Activated CD4-positive, alpha-beta T cell treated with anti-CD3 and anti-CD28 coated beads for 36 hours (primary cell): ENCODE measurements at regions of chr3 and their contacts with region 1.

Region 1: DNA sequence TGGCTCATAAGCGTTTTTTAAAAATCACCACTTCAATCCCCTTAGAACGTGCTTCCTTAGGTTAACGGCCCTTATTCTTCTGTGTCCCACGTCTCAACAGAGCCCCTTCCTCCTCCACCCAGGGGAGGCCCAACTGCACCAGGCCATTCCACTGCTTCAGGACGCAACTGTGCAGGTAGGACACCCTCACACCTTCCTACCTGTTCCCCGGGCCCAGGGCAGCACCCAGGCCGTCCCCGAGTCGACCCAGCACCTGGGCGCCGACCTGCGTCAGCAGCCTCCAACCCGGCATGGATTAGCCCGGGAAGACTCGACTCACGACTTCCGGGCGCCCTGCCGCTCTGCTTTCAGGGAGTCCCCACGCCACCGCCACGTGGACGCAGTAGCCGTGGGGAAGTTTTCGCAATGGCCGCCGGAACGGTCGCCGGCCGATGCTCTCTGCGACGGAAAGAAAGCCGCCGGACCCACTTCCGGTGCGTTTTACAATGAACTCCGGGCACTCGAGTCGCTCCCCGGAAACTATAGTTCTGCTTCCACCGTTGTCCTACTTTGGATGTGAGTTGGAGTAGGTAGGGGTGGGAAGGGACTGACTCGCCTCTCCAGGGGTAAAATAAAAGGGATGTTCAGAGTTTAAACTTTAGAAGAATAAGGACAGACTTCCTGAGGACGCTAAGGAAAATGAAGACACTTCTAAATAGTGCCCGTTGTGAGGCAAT is at the start of gene MRPL3:
- DNase-seq: peak; percentile 92
- ATAC-seq: peak; percentile 97
- H3K4me3 Mint-ChIP-seq: peak within 1 kb of the TSS; percentile 98
- H3K27ac Mint-ChIP-seq: peak within 1 kb of the TSS; percentile 93
- H3K4me1 Mint-ChIP-seq: peaks cover 33% of the 10 kb centered on the region
- H3K27me3 Mint-ChIP-seq: no peaks in the 10 kb centered on the region
- total RNA-seq, gene MRPL3: 166 to 278 TPM

Region 2: DNA sequence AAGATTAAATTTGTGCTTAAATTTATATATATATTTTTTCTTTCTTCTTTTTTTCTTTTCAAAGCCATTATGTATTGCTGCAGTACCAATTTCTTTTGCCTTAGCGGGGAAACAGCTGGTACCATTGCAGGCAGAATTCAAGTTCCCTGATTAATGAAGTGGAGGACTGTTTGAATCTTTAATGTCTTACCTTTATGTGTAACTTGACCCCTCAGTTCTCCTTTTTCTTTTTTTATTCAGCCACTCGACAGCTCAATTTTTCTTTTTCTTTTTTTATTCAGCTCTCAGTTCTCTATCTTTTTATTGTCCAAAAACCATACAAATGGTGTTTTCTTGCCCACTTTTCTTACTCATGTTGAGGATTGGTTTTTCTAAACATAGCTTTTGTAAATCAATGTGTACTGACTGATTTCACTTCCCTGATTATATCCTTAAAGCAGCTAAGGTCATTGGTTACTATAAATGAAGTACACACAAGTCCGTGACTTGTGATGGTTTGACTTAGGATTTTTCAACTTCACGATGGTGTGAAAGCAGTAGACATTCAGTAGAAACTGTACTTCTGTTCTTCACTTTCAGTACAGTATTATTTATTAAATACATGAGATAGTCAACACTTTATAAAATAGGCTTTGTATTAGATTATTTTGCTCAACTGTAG is 586.1 kb before region 1 on chr3:
- CTCF ChIA-PET with region 1: no interaction called
- POLR2A ChIA-PET with region 1: no interaction called
- intact Hi-C with region 1: no loop called
- DNase-seq: no peak
- ATAC-seq: no peak
- H3K4me3 Mint-ChIP-seq: no peak overlapping the region
- H3K27ac Mint-ChIP-seq: no peak overlapping the region
- H3K4me1 Mint-ChIP-seq: peaks cover 26% of the 10 kb centered on the region
- H3K27me3 Mint-ChIP-seq: no peaks in the 10 kb centered on the region

Region 3: DNA sequence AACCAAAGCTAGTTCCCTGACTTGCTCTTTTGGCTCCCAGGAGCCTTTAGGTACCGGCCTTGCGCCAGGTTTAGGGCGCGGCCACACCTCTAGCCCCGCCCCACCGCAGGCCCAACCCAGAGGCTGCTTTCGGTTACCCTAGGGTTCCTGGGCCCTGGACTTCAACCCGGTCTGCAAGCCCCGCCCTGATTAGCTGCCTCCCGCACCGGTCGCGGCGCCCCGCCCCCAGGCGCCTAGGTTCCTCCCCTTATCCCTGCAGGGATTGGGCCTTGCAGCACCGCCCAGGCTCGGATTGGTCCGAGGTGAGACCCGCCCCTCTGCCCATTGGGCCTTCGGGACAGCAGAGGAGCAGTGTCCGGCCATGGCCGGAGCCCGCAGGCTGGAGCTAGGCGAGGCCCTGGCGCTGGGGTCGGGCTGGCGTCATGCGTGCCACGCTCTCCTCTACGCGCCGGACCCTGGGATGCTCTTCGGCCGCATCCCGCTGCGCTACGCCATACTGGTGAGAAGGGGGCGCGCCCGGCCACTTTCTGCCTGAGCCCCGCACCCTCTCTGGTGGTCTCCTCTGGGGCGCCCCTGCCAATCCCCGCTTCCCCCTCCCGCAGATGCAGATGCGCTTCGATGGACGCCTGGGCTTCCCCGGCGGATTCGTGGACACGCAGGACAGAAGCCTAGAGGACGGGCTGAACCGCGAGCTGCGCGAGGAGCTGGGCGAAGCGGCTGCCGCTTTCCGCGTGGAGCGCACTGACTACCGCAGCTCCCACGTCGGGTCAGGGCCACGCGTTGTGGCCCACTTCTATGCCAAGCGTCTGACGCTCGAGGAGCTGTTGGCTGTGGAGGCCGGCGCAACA is 121.0 kb before region 1 on chr3 and contains the start of gene NUDT16:
- CTCF ChIA-PET with region 1: no interaction called
- POLR2A ChIA-PET with region 1: no interaction called
- intact Hi-C with region 1: loop called (anchors 1 kb)
- DNase-seq: peak; percentile 98
- ATAC-seq: peak; percentile 100
- H3K4me3 Mint-ChIP-seq: peak within 1 kb of the TSS; percentile 90
- H3K27ac Mint-ChIP-seq: peak within 1 kb of the TSS; percentile 91
- H3K4me1 Mint-ChIP-seq: peaks cover 22% of the 10 kb centered on the region
- H3K27me3 Mint-ChIP-seq: no peaks in the 10 kb centered on the region
- total RNA-seq, gene NUDT16: 4.0 to 5.7 TPM

Region 4: DNA sequence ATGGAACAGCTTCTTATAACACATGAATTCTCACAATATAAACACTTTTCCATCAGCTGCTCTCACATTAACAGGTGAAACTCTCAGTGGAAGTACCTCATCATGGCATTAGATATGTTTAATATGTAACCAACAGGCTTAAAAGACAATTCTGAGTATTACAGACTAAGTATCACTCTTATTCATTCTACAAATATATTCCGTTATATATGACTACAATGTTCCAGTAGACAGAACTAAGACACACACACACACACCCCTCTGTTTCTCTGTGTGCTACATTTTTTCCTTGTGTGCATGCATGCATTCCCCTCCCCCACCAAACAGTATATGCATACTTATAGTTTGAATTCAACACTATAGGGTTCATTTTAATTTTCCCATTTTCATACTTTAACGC is 32.3 kb before region 1 on chr3:
- CTCF ChIA-PET with region 1: interaction called, 3 read pairs
- POLR2A ChIA-PET with region 1: interaction called, 4 read pairs
- intact Hi-C with region 1: loop called in 1 of 2 experiments (anchors 1 kb)
- DNase-seq: peak; percentile 10
- ATAC-seq: peak; percentile 83
- H3K4me3 Mint-ChIP-seq: no peak overlapping the region
- H3K27ac Mint-ChIP-seq: peak overlapping the region; percentile 26
- H3K4me1 Mint-ChIP-seq: peaks cover 42% of the 10 kb centered on the region
- H3K27me3 Mint-ChIP-seq: no peaks in the 10 kb centered on the region